Activated T-helper 1 cell treated with anti-CD3 and anti-CD28 coated beads, Interleukin-12 subunit alpha, Interleukin-12 subunit beta, Interleukin-2, Interleukin-4 antibody, amounts not matched to agents 30 ng/mL and 10 ng/mL and 1 ng/mL, durations not matched to agents 14 hours and 24 hours and 36 hours (primary cell): ENCODE measurements at regions of chr18 and their contacts with region 1.

Region 1: DNA sequence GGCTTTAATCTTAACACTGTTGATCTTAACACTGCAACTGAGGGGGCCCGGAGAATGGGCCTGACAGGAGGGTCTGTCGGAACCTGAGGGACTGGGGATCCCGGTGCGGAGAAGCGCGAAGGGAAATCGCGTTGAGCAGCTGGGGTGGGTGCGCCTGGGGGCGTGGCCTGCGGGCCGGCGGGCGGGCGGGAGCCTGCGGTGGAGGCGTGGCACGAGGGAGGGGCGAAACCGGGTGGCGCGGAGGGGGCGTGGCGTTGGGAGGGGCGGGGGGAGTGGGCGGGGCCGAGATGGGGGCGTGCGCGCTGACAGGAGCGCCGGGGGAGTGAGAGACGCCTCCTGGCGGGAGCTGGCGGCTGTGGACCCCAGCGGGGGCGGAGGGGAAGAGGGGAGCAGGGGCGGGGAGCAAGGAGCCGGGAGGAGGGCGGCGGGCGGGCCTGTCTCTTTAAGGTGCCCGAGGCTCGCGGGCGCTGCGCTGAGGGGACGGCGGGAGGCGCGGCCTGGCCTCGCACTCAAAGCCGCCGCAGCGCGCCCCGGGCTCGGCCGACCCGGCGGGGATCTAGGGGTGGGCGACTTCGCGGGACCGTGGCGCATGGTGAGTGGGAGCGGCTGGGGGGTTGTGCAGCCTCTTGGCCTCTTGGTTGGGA is at the start of gene TWSG1:
- DNase-seq: peak; percentile 88
- H3K4me3 Mint-ChIP-seq: peak within 1 kb of the TSS; percentile 92
- H3K27ac Mint-ChIP-seq: peak within 1 kb of the TSS; percentile 49
- H3K4me1 Mint-ChIP-seq: peaks cover 33% of the 10 kb centered on the region
- H3K27me3 Mint-ChIP-seq: peaks cover 33% of the 10 kb centered on the region
- total RNA-seq, gene TWSG1: 10.6 and 11.3 TPM in 2 replicates

Region 2: GRCh38 chr18:8704361-8705279 is 629.8 kb before region 1 on chr18:
- intact Hi-C with region 1: loop called (anchors 1 kb)
- DNase-seq: peak; percentile 80
- H3K4me3 Mint-ChIP-seq: peak overlapping the region; percentile 89
- H3K27ac Mint-ChIP-seq: peak overlapping the region; percentile 23
- H3K4me1 Mint-ChIP-seq: peaks cover 14% of the 10 kb centered on the region
- H3K27me3 Mint-ChIP-seq: peaks cover 69% of the 10 kb centered on the region

Region 3: DNA sequence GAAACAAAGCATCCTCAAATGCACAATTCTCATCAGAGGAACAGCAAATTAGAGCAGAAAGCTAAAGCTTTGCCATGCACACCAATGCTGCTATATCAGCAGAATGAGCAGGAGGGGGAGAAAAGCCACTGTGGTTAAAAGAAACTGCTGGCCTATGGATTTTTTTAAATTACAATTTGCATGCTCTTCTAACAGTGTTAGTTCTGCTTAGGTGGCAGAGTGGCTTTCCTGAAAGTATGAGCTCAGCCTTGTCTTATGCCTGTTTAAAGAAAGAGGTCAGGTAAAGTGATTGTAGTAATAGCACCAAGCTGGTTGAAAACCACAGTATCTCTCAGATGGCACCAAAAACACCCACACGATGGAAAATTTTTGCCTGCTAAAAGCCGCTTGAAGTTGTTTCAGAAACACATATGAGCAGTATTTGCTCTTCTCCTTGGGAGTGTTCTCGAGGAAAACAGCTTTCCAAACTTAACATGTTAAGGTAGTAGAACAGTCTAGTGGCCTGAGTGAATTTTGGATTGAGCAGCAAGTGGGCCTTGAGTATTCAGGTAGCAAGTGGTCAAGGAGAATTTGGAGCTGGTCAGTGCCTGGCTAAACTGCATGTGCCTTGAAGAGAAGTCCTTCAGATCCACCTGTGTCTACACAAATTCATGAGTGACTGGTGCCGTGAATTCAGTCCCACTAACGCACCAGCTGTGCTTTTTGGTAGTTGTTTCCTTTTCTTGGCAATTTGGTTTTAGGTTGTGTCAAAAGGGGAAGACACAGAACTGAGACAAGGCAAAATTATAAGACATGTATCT is 251.5 kb before region 1 on chr18:
- intact Hi-C with region 1: loop called (anchors 2 kb)
- DNase-seq: peak; percentile 51
- H3K4me3 Mint-ChIP-seq: peak overlapping the region; percentile 75
- H3K27ac Mint-ChIP-seq: peak overlapping the region; percentile 98
- H3K4me1 Mint-ChIP-seq: peaks cover 50% of the 10 kb centered on the region
- H3K27me3 Mint-ChIP-seq: no peaks in the 10 kb centered on the region

Region 4: DNA sequence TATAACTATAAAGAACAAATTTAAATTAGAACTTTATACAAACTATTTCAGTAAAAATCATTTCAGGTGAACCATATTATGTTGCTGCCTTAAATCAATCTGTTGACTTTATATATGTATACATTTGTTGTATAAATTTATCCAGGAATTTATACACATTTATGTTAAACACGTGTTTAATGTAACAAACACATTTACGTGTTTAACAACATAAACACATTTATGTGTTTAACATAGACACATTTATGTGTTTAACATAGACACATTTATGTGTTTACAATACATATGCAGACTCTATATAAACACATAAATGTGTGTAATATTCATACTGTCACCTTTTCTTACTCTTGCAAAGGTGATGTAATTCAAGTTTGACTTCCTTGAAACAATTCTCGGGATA is 75.3 kb before region 1 on chr18:
- intact Hi-C with region 1: loop called (anchors 5 kb)
- DNase-seq: no peak
- H3K4me3 Mint-ChIP-seq: no peak overlapping the region
- H3K27ac Mint-ChIP-seq: no peak overlapping the region
- H3K4me1 Mint-ChIP-seq: no peaks in the 10 kb centered on the region
- H3K27me3 Mint-ChIP-seq: no peaks in the 10 kb centered on the region

Region 5: GRCh38 chr18:9516437-9517064 is 182.1 kb after region 1 on chr18:
- intact Hi-C with region 1: loop called (anchors 1 kb)
- DNase-seq: no peak
- H3K4me3 Mint-ChIP-seq: no peak overlapping the region
- H3K27ac Mint-ChIP-seq: no peak overlapping the region
- H3K4me1 Mint-ChIP-seq: peaks cover 12% of the 10 kb centered on the region
- H3K27me3 Mint-ChIP-seq: no peaks in the 10 kb centered on the region

Region 6: GRCh38 chr18:10453806-10454673 is 1119.6 kb after region 1 on chr18 and contains the start of gene APCDD1:
- intact Hi-C with region 1: no loop called
- DNase-seq: no peak
- H3K4me3 Mint-ChIP-seq: no peak within 1 kb of the TSS
- H3K27ac Mint-ChIP-seq: no peak within 1 kb of the TSS
- H3K4me1 Mint-ChIP-seq: no peaks in the 10 kb centered on the region
- H3K27me3 Mint-ChIP-seq: peaks cover 51% of the 10 kb centered on the region
- total RNA-seq, gene APCDD1: not detected in 2 replicates